CD4-positive, alpha-beta memory T cell (primary cell): ENCODE measurements at regions of chr17 and their contacts with region 1.

Region 1: GRCh38 chr17:47698749-47699535 is 5.0 kb downstream of the TBKBP1 start:
- DNase-seq: peak; percentile 57 to 74 (median 69)
- H3K4me3 ChIP-seq: no peak overlapping the region
- H3K4me3 Mint-ChIP-seq: peak overlapping the region in 4 of 8 donors; percentile 7 to 77 (median 20)
- H3K27ac ChIP-seq: no peak overlapping the region
- H3K27ac Mint-ChIP-seq: peak overlapping the region in 5 of 7 donors; percentile 0 to 80 (median 66)
- H3K4me1 ChIP-seq: peaks cover 56% of the 10 kb centered on the region
- H3K4me1 Mint-ChIP-seq: peaks cover 26 to 70% (median 44%) of the 10 kb centered on the region in 4 donors
- H3K27me3 ChIP-seq: no peaks in the 10 kb centered on the region
- H3K27me3 Mint-ChIP-seq: no peaks in the 10 kb centered on the region

Region 2: GRCh38 chr17:47663912-47664625 is 34.9 kb before region 1 on chr17:
- CTCF ChIA-PET with region 1: interaction called, 19 read pairs
- POLR2A ChIA-PET with region 1: interaction called, 6 read pairs
- intact Hi-C with region 1: loop called (anchors 5 kb)
- DNase-seq: peak; percentile 63 to 73 (median 68)
- H3K4me3 ChIP-seq: no peak overlapping the region
- H3K4me3 Mint-ChIP-seq: peak overlapping the region in 1 of 8 donors; percentile 0
- H3K27ac ChIP-seq: peak overlapping the region; percentile 22
- H3K27ac Mint-ChIP-seq: peak overlapping the region; percentile 24 to 90 (median 77)
- H3K4me1 ChIP-seq: peaks cover 32% of the 10 kb centered on the region
- H3K4me1 Mint-ChIP-seq: peaks cover 12 to 22% (median 14%) of the 10 kb centered on the region in 4 donors
- H3K27me3 ChIP-seq: no peaks in the 10 kb centered on the region
- H3K27me3 Mint-ChIP-seq: no peaks in the 10 kb centered on the region

Region 3: DNA sequence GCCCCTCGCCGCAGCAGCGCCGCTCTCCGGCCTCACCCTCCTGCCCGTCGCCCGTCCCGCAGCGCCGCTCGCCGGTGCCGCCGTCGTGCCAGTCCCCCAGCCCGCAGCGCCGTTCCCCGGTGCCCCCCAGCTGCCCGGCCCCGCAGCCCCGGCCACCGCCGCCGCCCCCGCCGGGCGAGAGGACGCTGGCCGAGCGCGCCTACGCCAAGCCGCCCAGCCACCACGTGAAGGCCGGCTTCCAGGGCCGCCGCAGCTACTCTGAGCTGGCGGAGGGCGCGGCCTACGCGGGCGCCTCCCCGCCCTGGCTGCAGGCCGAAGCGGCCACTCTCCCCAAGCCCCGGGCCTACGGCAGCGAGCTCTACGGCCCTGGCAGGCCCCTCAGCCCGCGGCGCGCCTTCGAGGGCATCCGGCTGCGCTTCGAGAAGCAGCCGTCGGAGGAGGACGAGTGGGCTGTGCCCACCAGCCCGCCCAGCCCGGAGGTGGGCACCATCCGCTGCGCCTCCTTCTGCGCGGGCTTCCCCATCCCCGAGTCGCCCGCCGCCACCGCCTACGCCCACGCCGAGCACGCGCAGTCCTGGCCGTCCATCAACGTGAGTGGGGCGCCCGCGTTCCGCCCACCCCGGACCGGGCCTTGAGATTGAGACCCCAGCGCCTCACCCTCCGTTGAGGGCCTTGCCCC is 10.1 kb after region 1 on chr17:
- CTCF ChIA-PET with region 1: interaction called, 118 read pairs
- POLR2A ChIA-PET with region 1: interaction called, 17 read pairs
- intact Hi-C with region 1: no loop called
- DNase-seq: peak in 1 of 5 donors; percentile 23
- H3K4me3 ChIP-seq: no peak overlapping the region
- H3K4me3 Mint-ChIP-seq: no peak overlapping the region
- H3K27ac ChIP-seq: no peak overlapping the region
- H3K27ac Mint-ChIP-seq: no peak overlapping the region
- H3K4me1 ChIP-seq: peaks cover 45% of the 10 kb centered on the region
- H3K4me1 Mint-ChIP-seq: peaks cover 39 to 68% (median 53%) of the 10 kb centered on the region in 4 donors
- H3K27me3 ChIP-seq: no peaks in the 10 kb centered on the region
- H3K27me3 Mint-ChIP-seq: no peaks in the 10 kb centered on the region

Region 4: DNA sequence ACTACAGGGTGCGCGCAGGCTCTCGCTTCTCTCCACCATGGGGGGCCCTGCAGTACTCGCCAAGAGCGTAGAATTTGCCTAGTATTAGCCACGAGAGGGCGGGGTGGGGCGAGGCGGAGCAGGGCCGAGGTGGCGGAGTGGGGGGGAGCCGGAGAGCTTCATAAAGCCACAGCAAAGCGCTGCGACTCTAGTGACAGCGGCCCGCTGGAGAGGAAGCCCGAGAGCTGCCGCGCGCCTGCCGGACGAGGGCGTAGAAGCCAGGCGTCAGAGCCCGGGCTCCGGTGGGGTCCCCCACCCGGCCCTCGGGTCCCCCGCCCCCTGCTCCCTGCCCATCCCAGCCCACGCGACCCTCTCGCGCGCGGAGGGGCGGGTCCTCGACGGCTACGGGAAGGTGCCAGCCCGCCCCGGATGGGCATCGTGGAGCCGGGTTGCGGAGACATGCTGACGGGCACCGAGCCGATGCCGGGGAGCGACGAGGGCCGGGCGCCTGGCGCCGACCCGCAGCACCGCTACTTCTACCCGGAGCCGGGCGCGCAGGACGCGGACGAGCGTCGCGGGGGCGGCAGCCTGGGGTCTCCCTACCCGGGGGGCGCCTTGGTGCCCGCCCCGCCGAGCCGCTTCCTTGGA is 34.2 kb after region 1 on chr17 and contains the start of gene TBX21:
- CTCF ChIA-PET with region 1: interaction called, 62 read pairs
- POLR2A ChIA-PET with region 1: interaction called, 145 read pairs
- intact Hi-C with region 1: loop called (anchors 1 kb)
- DNase-seq: peak; percentile 87 to 93 (median 88)
- H3K4me3 ChIP-seq: peak within 1 kb of the TSS; percentile 72 to 83
- H3K4me3 Mint-ChIP-seq: peak within 1 kb of the TSS; percentile 92 to 100 (median 100)
- H3K27ac ChIP-seq: peak within 1 kb of the TSS; percentile 70
- H3K27ac Mint-ChIP-seq: peak within 1 kb of the TSS; percentile 85 to 99 (median 97)
- H3K4me1 ChIP-seq: peaks cover 40% of the 10 kb centered on the region
- H3K4me1 Mint-ChIP-seq: peaks cover 31 to 83% (median 44%) of the 10 kb centered on the region in 4 donors
- H3K27me3 ChIP-seq: no peaks in the 10 kb centered on the region
- H3K27me3 Mint-ChIP-seq: peaks cover 0 to 1% of the 10 kb centered on the region in 2 donors
- total RNA-seq, gene TBX21: 15.8 to 17.9 TPM

Region 5: DNA sequence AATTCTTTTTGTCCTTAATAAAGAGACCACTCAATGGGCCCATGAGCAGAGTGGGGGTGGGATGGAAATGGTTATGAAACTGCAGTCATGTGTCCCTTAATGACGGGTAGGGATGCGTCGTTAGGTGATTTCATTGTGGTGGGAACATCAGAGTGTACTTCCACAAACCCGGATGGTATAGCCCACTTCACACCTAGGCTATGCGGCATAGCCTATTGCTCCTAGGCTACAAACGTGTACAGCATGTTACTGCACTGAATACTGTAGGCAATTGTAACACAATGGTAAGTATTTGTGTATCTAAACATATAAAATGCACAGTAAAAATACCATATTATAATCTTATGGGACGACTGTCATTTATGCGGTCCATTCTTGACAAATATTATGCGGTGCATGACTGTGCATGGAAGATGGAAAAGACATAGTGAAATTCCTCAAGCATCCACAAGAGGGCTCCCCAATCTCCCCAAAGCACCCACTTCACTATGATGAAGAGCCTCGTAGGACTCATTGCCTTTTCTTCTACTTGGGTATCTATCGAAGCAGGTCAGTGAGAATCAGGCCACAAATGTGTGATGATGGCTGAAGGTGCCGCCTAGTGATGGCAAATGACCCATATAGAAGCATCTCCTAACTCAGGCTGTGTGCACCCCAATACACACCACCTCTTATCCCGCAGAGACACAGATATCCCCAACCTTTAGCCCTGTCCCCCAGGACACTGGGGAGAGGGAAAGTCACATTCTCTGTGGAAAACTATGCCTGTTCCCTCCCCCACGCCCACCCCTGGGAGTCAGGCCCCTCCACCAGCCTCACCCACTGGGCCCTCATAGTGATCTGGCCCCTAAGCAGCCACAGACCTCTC is 77.6 kb after region 1 on chr17:
- CTCF ChIA-PET with region 1: interaction called, 3 read pairs
- POLR2A ChIA-PET with region 1: no interaction called
- intact Hi-C with region 1: loop called (anchors 1 kb)
- DNase-seq: peak; percentile 46 to 56 (median 48)
- H3K4me3 ChIP-seq: no peak overlapping the region
- H3K4me3 Mint-ChIP-seq: no peak overlapping the region
- H3K27ac ChIP-seq: no peak overlapping the region
- H3K27ac Mint-ChIP-seq: no peak overlapping the region
- H3K4me1 ChIP-seq: no peaks in the 10 kb centered on the region
- H3K4me1 Mint-ChIP-seq: peaks cover 0 to 5% (median 3%) of the 10 kb centered on the region in 4 donors
- H3K27me3 ChIP-seq: peaks cover 23% of the 10 kb centered on the region
- H3K27me3 Mint-ChIP-seq: peaks cover 33 to 35% of the 10 kb centered on the region in 2 donors